ENCODE measurements at regions of chr9 and their contacts with region 1.

Region 1: DNA sequence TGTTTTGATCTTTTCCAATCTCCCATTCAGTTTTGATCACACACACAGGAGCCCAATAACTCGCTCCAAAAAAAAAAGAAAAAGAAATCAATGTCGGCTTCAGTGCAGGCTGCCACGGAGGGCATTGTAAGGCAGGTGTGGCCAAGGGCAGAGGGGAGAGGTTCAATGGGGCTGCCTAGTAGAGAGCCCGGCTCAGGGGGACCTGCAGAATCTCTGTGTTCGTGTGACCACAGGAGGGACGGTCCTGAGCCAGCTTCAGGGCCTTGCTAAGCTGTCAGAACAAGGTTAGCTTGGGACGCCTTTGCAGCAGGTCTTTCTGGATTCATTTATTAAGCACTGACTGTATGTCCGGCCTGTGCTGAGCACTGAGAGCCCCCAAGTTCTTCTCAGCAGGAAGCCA is 22.2 kb downstream of the OLFM1 start:
- DNase-seq: no peak
- H3K4me3 ChIP-seq: no peak overlapping the region
- H3K27ac ChIP-seq: no peak overlapping the region
- H3K4me1 ChIP-seq: no peaks in the 10 kb centered on the region
- H3K27me3 ChIP-seq: no peaks in the 10 kb centered on the region
- CTCF ChIP-seq: no peak

Region 2: DNA sequence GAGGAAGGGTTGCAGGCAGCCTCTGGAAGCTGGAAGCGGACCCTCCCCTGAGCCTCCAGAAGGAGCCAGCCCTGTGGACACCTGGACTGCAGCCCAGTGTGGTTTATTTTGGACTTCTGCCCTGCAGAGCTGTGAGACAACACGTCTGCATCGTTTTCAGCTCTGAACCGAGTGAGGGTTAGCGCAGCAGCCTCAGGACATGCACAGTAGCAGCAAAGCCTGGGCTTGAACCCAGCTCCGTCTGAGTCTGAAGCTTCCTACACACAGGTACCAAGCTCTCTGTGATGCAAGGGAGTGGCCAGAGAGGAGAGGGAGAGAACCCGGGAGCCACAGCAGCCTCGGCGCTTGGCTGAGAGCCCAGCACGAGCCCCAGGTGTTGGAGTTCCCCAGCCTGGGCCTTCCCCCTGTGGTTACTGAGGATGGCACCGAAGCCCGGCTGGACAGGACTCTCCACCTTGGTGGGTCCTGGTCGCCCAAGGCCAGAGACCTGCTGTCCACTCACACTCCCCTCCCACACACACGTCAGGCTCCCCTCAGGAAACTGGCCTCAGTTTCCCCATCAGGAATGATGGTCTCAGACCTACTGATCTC is 106.0 kb after region 1 on chr9:
- CTCF ChIA-PET with region 1: no interaction called
- dilution Hi-C with region 1: loop called (anchors 5 kb)
- in situ Hi-C with region 1: no loop called
- intact Hi-C with region 1: no loop called
- DNase-seq: peak; percentile 8
- H3K4me3 ChIP-seq: no peak overlapping the region
- H3K27ac ChIP-seq: no peak overlapping the region
- H3K4me1 ChIP-seq: no peaks in the 10 kb centered on the region
- H3K27me3 ChIP-seq: no peaks in the 10 kb centered on the region
- CTCF ChIP-seq: no peak

Measured in mammary epithelial cell (primary cell).